ENCODE measurements at regions of chr9 and their contacts with region 1.

Region 1: DNA sequence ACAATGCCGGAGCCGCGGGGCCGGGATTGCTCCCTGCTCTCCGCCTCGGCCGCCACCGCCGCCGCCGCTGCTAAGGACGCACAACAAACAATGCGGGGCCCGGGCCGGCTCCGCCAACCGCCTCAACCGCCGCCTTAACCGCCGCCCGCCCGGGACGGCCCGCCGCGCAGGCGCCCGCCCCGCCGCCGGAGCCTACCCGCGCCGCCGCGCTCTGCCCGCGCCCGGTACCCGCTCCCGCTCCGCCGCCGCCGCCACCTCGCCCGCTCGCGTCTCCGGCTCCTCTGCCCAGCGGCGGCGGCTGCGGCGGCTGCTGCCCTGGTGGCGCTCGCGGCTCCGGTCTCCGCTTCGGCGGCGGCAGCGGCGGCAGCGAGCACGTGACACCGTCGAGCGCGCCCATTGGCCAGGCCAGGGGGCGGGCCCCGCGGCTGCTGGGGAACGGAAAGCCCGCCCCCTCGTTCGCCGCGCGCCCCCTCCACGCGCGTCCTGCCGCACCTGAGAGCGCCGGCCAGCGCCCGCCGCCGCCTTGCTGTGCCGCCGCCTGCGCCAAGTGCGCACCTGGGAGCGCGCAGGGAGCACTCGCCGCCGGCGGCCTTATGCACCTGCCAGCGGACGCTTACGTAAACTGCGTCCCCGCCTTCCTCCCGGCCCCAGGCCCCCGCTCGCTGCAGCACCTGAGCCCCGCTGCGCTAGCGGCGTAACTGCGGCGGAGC is at the start of gene STRBP:
- DNase-seq: peak; percentile 96
- ATAC-seq: peak; percentile 93
- H3K4me3 Mint-ChIP-seq: peak within 1 kb of the TSS; percentile 73
- H3K27ac Mint-ChIP-seq: peak within 1 kb of the TSS; percentile 26
- H3K4me1 Mint-ChIP-seq: peaks cover 32% of the 10 kb centered on the region
- H3K27me3 Mint-ChIP-seq: no peaks in the 10 kb centered on the region
- total RNA-seq, gene STRBP: 31.6 to 34.8 TPM

Region 2: DNA sequence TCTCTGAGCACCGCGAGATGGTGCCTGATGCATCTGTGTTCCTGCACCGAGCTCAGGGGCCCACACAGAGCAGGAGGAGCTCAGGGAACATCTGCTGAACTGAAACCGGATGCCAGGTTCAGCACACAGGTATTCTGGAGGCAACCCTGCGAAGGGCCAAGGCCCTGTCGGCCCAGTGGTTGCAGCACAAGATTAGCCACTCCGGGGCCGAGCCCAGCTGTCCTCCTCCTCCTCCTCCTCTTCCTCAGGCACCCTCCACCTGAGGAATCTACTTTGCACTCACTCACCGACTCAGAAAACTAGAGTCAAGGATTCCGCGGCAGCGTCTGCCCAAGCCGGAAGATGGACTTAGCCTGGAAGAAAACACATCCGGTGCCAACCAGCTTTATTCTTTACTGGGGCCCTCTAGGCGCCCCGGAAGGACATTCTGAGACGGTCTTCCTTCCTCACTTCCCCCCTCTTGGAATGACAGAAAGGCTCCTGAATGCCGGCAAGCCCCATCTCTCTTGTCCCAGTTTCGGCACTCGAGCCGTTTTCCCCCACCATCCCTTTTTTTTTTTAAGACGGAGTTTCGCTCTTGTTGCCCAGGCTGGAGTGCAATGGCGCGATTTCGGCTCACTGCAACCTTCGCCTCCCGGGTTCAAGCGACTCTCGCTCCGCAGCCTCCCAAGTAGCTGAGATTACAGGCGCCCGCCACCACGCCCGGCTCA is 355.3 kb before region 1 on chr9 and contains the start of gene ZBTB6:
- CTCF ChIA-PET with region 1: no interaction called
- POLR2A ChIA-PET with region 1: no interaction called
- intact Hi-C with region 1: loop called in 1 of 2 experiments (anchors 1 kb)
- DNase-seq: peak; percentile 86
- ATAC-seq: peak; percentile 96
- H3K4me3 Mint-ChIP-seq: peak within 1 kb of the TSS; percentile 100
- H3K27ac Mint-ChIP-seq: peak within 1 kb of the TSS; percentile 100
- H3K4me1 Mint-ChIP-seq: peaks cover 33% of the 10 kb centered on the region
- H3K27me3 Mint-ChIP-seq: no peaks in the 10 kb centered on the region
- total RNA-seq, gene ZBTB6: 8.8 to 9.3 TPM

Region 3: DNA sequence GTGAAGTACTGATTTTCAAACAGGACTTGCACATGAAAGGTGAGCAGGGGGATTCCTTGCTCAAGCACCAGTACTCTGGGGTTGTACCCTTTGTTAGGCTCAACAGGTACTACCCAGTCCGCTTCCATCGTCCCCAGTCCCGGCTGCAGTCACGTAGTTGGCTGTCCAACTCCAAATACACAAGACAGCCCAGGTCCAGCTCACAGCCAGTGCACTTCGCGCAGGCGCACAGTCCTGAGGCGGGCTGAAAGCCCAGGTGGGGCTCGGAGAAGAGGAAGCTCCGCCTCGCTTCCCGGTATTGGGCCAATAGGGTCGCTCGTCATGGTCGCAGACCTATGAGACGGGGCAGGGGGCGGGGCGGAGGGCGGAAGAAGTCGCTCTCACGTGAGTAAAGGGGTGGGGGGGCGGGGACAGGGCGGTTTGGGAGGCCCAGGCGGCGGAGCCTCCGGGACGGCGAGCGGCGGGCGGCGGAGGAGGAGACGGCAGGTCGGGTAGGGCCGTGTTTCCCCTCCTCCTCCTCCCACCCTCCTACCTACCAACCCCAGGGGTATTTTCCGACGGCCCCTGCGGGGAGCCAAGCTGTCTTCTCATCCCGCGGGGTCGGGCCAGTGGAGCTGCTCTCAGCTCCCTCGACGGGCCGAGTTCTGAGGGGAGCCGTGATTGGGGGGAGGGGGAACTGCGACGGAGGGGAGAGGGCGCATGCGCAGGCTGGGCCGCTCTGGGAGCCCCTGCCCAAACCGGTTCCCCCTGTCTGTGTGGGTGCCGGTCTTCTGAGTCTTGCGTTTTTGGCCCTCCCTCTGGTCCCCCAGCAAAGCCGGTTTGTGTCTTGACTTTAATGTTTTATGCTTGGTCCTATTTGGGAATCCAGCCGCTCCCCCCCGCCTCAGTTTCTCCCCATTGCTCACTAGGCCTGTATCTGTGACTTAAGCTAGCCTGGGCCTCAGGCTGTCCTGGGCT is 327.5 kb before region 1 on chr9 and contains the start of gene RABGAP1:
- CTCF ChIA-PET with region 1: no interaction called
- POLR2A ChIA-PET with region 1: no interaction called
- intact Hi-C with region 1: loop called in 1 of 2 experiments (anchors 2 kb)
- DNase-seq: peak; percentile 99
- ATAC-seq: peak; percentile 99
- H3K4me3 Mint-ChIP-seq: peak within 1 kb of the TSS; percentile 99
- H3K27ac Mint-ChIP-seq: peak within 1 kb of the TSS; percentile 95
- H3K4me1 Mint-ChIP-seq: peaks cover 33% of the 10 kb centered on the region
- H3K27me3 Mint-ChIP-seq: no peaks in the 10 kb centered on the region
- total RNA-seq, gene RABGAP1: 24.3 to 27.2 TPM

Region 4: DNA sequence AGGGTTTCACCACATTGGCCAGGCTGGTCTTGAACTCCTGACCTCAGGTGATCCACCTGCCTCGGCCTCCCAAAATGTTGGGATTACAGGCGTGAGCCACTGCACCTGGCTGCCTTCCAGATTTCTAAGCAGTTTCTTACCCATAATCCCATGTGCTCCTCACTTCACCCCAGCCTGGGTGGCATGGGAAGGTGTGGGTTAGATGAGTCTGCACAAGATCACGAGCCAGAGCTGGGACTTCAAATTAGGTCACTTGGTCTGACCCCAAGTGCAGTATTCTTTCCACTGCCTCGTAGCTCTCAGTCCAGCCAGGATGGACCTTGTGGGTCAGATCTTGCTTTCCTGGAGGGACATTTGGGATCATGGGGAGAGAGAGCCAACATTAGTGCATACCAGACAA is 37.5 kb after region 1 on chr9:
- CTCF ChIA-PET with region 1: no interaction called
- POLR2A ChIA-PET with region 1: no interaction called
- intact Hi-C with region 1: loop called in 1 of 2 experiments (anchors 2 kb)
- DNase-seq: no peak
- ATAC-seq: no peak
- H3K4me3 Mint-ChIP-seq: no peak overlapping the region
- H3K27ac Mint-ChIP-seq: no peak overlapping the region
- H3K4me1 Mint-ChIP-seq: peaks cover 36% of the 10 kb centered on the region
- H3K27me3 Mint-ChIP-seq: no peaks in the 10 kb centered on the region

Region 5: DNA sequence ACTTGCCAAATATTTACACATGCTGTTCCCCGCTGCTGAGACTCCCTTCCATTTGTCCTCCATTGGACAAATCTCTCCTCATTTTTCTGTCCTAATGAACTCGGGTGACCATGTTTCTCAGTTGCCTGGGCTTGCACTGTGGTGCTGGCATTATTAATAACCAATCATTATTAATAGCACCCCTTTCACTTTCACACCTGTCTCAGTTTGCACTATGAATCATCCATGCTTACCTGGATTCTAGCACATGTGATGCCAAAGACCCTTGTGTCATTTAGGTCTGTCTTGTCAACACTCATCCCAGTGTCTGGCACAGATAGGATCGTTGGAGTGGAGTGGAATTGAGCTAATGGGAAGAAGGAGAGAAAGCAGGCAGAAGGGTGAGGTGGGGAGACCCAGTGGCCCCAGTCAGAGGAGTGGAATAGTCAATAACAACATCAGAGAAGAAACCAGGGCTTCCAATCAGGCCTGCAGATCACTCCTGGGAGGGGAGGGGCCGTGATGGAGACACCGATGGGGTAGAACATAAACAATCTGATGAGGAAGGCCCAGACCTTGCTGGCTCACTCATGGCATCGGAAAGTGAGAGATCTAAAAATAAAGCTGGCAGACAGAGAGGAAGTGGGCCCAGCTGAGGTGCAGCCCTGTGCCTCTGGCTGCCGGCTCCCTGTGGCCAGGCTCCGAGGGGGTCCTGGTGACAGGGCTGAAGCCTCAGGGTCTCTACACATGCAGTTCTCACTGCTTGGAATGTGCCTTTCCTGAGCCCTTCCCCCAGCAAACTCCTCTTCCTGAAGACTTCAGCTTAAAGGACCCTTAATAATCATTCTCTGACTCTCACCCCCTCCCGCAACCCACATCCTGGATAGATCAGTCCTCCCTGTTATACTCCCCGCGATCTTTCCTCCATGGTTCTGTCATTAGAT is 54.1 kb after region 1 on chr9:
- CTCF ChIA-PET with region 1: no interaction called
- POLR2A ChIA-PET with region 1: no interaction called
- intact Hi-C with region 1: loop called in 1 of 2 experiments (anchors 1 kb)
- DNase-seq: peak; percentile 79
- ATAC-seq: peak; percentile 89
- H3K4me3 Mint-ChIP-seq: peak overlapping the region; percentile 39
- H3K27ac Mint-ChIP-seq: peak overlapping the region; percentile 92
- H3K4me1 Mint-ChIP-seq: peaks cover 35% of the 10 kb centered on the region
- H3K27me3 Mint-ChIP-seq: no peaks in the 10 kb centered on the region

Region 6: DNA sequence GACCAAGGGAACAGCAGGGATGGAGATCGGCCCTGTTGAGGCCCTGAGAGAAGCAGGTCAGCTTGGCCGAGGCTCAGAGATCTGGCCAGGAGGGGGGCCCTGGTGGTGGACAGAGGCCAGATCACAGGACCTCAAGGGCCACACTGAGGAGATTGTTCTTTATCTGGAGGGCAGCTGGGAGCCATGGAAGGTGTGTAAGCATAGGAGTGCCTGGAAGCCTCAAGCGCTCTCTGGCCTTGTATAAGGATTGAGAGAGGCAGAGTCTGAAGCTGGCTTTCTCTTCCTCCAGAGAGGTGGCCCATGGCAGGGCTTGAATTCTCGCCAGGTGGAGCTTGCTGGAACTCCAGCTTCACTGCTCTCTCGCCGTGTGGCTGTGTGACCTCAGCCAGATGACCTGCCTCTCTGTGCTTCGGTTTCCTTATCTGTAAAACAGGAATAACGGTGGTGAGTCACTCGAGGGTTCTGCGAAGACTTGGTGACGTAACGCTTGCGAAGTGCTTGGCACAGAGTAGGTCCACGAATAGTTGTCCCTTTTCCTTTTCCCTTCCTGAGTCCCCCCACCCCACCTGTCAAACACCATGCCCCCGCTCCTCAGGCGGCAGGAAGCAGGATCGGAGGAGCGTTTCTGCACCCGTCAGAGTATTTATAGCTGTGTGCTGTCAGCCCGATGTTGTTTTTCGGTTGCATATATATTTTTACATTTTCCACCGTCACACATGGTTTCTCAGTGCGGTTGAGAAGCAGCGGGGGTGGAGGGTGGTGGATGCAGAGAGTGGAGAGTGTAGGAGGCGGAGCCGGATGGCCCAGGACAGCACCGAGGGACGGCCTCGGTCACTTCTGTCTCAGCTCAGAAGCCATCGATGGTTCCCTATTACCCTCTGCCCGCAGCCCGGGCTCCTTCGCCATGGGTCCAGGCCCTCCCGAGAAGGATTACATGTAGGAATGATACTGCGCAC is 70.6 kb after region 1 on chr9:
- CTCF ChIA-PET with region 1: no interaction called
- POLR2A ChIA-PET with region 1: interaction called, 3 read pairs
- intact Hi-C with region 1: loop called (anchors 1 kb)
- DNase-seq: peak; percentile 87
- ATAC-seq: peak; percentile 75
- H3K4me3 Mint-ChIP-seq: peak overlapping the region; percentile 62
- H3K27ac Mint-ChIP-seq: peak overlapping the region; percentile 99
- H3K4me1 Mint-ChIP-seq: peaks cover 35% of the 10 kb centered on the region
- H3K27me3 Mint-ChIP-seq: no peaks in the 10 kb centered on the region